ENCODE measurements at regions of chr6 and their contacts with region 1.

Region 1: DNA sequence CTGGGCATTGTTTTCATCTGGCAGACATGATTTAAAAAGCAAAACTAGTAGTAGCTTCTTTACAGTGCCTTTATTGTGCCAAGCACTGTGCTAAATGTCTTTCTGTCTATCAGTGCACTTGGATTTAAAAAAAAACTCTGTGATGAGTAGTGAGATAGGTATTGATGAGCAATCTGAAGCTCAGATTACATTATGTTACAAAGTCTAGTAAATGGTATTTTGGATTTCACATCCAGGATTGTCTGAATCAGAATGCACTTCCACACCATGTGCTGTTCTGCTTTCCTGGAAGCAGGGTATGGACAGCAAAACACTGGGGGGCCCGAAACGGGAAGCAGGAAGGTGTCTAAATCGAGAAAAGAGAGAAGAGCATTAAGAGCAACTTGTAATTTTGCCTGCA is 103.4 kb upstream of the CCN2 start:
- DNase-seq: peak; percentile 53
- H3K4me3 ChIP-seq: no peak overlapping the region
- H3K27ac ChIP-seq: peak overlapping the region; percentile 90
- H3K27me3 ChIP-seq: no peaks in the 10 kb centered on the region
- CTCF ChIP-seq: no peak

Region 2: DNA sequence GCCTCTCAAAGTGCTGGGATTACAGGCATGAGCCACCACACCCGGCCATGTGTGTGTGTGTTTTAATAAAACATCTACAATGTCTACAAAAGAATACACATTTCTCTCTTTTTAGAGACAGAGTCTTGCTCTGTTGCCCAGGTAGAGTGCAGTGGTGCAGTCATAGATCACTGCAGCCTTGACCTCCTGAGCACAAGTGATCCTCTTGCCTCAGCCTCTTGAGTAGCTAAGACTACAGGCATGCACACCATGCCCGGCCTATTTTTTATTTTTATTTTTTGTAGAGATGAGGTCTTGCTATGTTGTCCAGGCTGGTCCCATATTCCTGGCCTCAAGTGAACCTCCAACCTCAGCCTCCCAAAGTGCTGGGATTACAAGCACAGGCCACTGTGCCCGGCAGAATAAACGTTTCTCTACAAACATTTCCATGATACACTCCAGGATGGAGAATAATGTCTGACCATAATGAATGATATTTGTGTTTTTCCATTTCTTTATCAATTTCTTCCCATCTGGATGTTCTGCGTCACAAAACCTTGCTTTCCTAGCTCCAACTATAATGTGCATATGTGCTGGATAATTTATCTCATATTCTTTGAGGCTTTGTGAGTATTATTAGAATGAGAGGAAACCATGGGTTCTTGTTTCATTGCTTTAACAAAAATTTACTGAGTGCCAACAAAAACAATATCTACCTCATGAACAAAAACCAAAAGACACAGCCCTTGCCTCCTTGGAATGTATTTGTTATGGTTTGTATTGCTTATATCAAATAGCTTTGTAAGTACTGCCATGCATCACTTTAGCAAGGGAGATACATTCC is 74.8 kb before region 1 on chr6:
- CTCF ChIA-PET with region 1: no interaction called
- POLR2A ChIA-PET with region 1: interaction called, 11 read pairs
- DNase-seq: peak; percentile 84
- H3K4me3 ChIP-seq: no peak overlapping the region
- H3K27ac ChIP-seq: peak overlapping the region; percentile 80
- H3K27me3 ChIP-seq: no peaks in the 10 kb centered on the region
- CTCF ChIP-seq: no peak

Region 3: DNA sequence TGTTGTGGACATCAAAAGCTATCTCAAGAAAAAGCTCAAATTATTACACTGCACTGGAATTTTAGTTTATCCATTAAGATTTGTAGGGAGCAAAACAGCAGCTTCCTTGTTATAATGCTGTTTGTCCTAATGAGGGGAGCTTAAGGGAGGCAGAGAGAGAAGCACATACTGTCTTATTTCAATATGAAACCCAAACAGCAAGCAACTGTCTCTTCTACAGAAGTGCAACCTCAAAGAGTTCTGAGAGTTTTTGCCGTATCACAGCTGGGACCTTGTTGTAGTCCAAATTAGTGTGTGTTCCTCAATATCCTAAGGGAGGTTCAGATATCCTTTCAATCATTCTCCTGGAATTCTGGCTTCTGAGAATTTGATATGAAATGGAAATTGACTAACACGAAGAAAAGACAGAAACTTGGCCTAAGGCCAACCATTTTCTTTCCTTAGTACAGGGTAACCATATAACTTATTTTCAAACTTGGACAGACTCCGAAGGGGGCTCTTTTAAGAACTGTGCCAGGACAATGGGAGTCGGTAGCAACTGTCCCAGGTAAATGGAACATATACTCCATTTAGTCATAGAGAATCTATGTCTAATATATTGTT is 46.0 kb after region 1 on chr6:
- CTCF ChIA-PET with region 1: no interaction called
- POLR2A ChIA-PET with region 1: no interaction called
- DNase-seq: no peak
- H3K4me3 ChIP-seq: no peak overlapping the region
- H3K27ac ChIP-seq: no peak overlapping the region
- H3K27me3 ChIP-seq: no peaks in the 10 kb centered on the region
- CTCF ChIP-seq: no peak

Measured in AG04450 (cell line).